ENCODE measurements at regions of chr1 and their contacts with region 1.

Region 1: GRCh38 chr1:20446796-20447195 is 39.2 kb downstream of the CAMK2N1 start:
- DNase-seq: peak; percentile 66
- ATAC-seq: peak; percentile 59
- H3K4me3 ChIP-seq: no peak overlapping the region
- H3K27ac ChIP-seq: no peak overlapping the region
- H3K4me1 ChIP-seq: no peaks in the 10 kb centered on the region
- H3K27me3 ChIP-seq: peaks cover 10% of the 10 kb centered on the region
- CTCF ChIP-seq: no peak
- POLR2A ChIP-seq: no peak
- RAD21 ChIP-seq: no peak

Region 2: DNA sequence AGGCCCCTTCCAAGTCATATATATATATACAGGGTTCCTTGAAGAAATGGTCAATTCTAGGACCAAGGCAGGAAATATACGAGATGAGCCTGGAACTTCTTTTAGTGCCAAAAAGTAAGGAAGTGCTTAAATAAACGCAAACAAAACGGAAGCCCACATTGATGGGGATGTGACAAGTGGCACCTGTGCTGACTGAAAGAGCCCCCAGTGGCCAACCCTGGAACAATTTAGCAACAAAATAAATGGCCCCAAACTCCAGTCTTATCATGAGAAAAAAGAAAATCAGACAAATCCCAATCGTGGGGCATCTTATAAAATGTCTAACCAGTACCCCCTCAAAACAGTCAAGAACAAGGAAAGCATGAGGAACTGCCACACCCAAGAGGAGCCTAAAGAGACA is 359.1 kb before region 1 on chr1:
- CTCF ChIA-PET with region 1: no interaction called
- POLR2A ChIA-PET with region 1: interaction called, 11 read pairs
- dilution Hi-C with region 1: no loop called
- in situ Hi-C with region 1: no loop called
- intact Hi-C with region 1: no loop called
- DNase-seq: no peak
- ATAC-seq: no peak
- H3K4me3 ChIP-seq: no peak overlapping the region
- H3K27ac ChIP-seq: no peak overlapping the region
- H3K4me1 ChIP-seq: no peaks in the 10 kb centered on the region
- H3K27me3 ChIP-seq: peaks cover 30% of the 10 kb centered on the region
- CTCF ChIP-seq: no peak
- POLR2A ChIP-seq: no peak
- RAD21 ChIP-seq: no peak

Region 3: GRCh38 chr1:20469406-20470076 is 22.7 kb after region 1 on chr1:
- CTCF ChIA-PET with region 1: no interaction called
- POLR2A ChIA-PET with region 1: no interaction called
- dilution Hi-C with region 1: no loop called
- in situ Hi-C with region 1: no loop called
- intact Hi-C with region 1: no loop called
- DNase-seq: no peak
- ATAC-seq: no peak
- H3K4me3 ChIP-seq: no peak overlapping the region
- H3K27ac ChIP-seq: no peak overlapping the region
- H3K4me1 ChIP-seq: no peaks in the 10 kb centered on the region; the same call in 1 of the 2 replicates
- H3K27me3 ChIP-seq: peaks cover 41% of the 10 kb centered on the region
- CTCF ChIP-seq: 0 out of 2 replicates have a peak, but pooled peaks have one; percentile 24
- POLR2A ChIP-seq: no peak
- RAD21 ChIP-seq: no peak

Region 4: DNA sequence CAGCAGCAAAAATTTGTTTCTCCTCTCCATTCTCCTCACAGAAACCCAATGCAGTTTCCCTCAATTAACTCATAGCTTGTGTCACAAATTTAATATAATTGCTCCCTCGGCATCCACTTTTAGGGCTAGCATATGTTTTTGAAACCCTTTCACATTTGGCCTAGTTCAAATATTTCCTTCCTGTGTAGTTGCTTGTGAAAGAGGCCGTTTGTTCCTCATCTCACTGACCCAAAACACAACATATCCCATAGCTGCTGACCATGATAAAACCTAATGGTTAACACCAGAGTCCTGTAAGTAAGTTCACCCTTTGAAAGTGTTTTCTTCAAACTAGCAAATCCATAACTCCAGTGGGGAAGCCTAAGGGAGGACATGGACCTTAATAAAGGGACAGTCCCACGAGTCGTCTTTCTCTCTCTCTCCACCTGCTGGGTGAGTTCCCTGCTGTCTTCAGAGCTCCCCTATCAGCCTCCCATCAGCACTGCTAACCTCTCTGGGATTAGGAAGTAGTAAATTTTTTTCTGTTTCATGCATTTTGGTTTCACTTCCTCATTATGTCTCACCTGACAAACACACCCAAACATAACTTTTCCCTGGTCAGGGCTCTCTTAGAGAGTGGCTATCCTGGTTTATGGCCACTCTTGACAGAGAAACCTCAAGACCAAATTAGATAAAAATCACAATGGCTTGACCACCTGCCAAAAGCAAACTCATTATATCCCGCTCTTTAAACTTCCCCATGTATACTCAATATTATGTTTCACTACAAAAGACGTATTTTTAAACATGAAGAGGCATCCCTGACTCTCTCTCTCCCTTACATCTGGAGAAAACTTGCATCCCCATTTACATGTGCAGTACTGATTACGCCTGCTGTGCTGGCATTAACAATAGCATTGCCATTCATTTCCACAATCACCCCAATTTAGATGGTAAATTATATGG is 518.0 kb after region 1 on chr1:
- CTCF ChIA-PET with region 1: no interaction called
- POLR2A ChIA-PET with region 1: no interaction called
- dilution Hi-C with region 1: no loop called
- in situ Hi-C with region 1: no loop called
- intact Hi-C with region 1: no loop called
- DNase-seq: no peak
- ATAC-seq: no peak
- H3K4me3 ChIP-seq: no peak overlapping the region
- H3K27ac ChIP-seq: no peak overlapping the region
- H3K4me1 ChIP-seq: no peaks in the 10 kb centered on the region
- H3K27me3 ChIP-seq: no peaks in the 10 kb centered on the region
- CTCF ChIP-seq: no peak
- POLR2A ChIP-seq: no peak
- RAD21 ChIP-seq: no peak

Measured in IMR-90 (cell line).